ENCODE measurements at regions of chr16 and their contacts with region 1.

Region 1: GRCh38 chr16:75566040-75566810 is at the start of gene GABARAPL2:
- DNase-seq: peak; percentile 90
- H3K4me3 ChIP-seq: peak within 1 kb of the TSS; percentile 81 to 92 (median 84)
- H3K27ac ChIP-seq: peak within 1 kb of the TSS; percentile 78 to 87 (median 85)
- H3K4me1 ChIP-seq: peaks cover 12 to 52% (median 23%) of the 10 kb centered on the region in 4 donors
- H3K27me3 ChIP-seq: no peaks in the 10 kb centered on the region
- CTCF ChIP-seq: no peak
- EP300 ChIP-seq: no peak
- POLR2A ChIP-seq: peak; percentile 85
- total RNA-seq, gene GABARAPL2: 40.0 to 128 (median 81.3) TPM

Region 2: DNA sequence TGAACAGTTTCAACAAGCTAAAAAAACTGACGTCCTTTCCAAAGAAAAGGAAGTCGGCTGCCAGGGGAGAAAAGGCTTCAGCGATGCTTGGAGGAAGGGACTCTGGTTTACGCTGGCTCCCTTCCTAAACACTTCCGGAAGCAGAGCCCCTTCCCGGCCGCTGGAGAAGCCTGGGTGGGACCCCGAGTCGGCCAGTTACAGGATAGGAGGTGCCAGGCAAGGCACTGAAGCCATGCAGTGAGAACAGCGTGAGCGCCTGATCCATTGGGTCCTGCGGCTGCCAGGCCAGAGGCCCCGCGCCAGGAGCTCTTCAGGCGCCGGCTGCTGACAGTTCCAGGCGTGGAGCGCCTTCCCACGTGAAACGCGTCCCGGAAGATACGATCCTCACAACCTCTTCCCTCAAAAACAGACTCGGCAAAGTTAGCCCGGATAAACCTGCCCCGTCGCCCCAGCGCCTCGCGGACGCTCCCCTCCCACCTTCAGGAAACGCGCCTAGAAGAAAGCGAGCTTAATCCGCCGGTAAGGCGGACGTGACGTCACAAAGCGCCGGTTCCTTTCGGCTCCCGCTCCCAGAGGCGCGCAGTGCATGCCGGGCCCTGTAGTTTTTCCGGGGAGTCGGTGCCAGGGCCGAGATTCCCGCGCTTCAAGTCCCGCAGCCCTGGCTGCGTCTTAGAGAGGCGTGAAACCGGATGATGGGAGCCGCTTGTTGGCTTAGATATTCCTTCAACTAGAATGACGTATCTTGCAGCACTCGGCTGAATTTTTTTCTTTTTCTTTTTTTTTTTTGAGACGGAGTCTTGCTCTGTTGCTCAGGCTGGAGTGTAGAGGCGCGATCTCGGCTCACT is 56.8 kb after region 1 on chr16 and contains the start of gene ADAT1:
- in situ Hi-C with region 1: no loop called
- intact Hi-C with region 1: loop called (anchors 2 kb)
- DNase-seq: peak; percentile 99
- H3K4me3 ChIP-seq: peak within 1 kb of the TSS; percentile 51 to 72 (median 62)
- H3K27ac ChIP-seq: peak within 1 kb of the TSS; percentile 92 to 97 (median 94)
- H3K4me1 ChIP-seq: peaks cover 11 to 26% (median 16%) of the 10 kb centered on the region in 4 donors
- H3K27me3 ChIP-seq: no peaks in the 10 kb centered on the region
- CTCF ChIP-seq: no peak
- EP300 ChIP-seq: no peak
- POLR2A ChIP-seq: peak; percentile 85
- total RNA-seq, gene ADAT1: 14.1 to 94.3 (median 49.1) TPM

Measured in transverse colon (tissue), 4 donors.